Activated CD8-positive, alpha-beta memory T cell treated with anti-CD3 and anti-CD28 coated beads, Interleukin-2, amount 10 ng/mL, durations not matched to agents 7 days and 5 days (primary cell): ENCODE measurements at regions of chr9 and their contacts with region 1.

Region 1: GRCh38 chr9:116737152-116737546 is 50.0 kb downstream of the TRIM32 start:
- DNase-seq: peak; percentile 67
- ATAC-seq: no peak
- H3K4me3 Mint-ChIP-seq: no peak overlapping the region
- H3K27ac Mint-ChIP-seq: no peak overlapping the region
- H3K4me1 Mint-ChIP-seq: peaks cover 2% of the 10 kb centered on the region
- H3K27me3 Mint-ChIP-seq: peaks cover 5% of the 10 kb centered on the region

Region 2: DNA sequence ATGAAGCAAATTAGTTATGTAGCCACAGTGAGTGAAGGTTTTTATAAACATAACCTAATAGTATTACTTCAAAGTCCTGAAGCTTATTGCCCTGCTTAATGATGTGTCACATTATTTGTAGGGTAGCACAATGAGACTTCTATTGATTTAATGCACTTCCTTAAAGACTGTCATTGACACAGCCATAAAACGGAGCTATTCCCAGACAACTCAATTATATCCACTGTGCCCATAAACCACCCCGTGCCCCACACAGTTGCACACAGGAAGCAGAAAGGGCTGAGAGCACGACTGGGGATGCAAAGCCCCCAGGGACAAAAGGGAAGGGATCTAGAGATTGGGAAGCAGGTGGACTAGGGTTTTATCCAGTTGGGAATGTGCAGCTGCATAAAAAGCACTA is 13.0 kb before region 1 on chr9:
- CTCF ChIA-PET with region 1: interaction called, 15 read pairs
- DNase-seq: no peak
- ATAC-seq: no peak
- H3K4me3 Mint-ChIP-seq: no peak overlapping the region
- H3K27ac Mint-ChIP-seq: no peak overlapping the region
- H3K4me1 Mint-ChIP-seq: no peaks in the 10 kb centered on the region
- H3K27me3 Mint-ChIP-seq: peaks cover 2% of the 10 kb centered on the region

Region 3: DNA sequence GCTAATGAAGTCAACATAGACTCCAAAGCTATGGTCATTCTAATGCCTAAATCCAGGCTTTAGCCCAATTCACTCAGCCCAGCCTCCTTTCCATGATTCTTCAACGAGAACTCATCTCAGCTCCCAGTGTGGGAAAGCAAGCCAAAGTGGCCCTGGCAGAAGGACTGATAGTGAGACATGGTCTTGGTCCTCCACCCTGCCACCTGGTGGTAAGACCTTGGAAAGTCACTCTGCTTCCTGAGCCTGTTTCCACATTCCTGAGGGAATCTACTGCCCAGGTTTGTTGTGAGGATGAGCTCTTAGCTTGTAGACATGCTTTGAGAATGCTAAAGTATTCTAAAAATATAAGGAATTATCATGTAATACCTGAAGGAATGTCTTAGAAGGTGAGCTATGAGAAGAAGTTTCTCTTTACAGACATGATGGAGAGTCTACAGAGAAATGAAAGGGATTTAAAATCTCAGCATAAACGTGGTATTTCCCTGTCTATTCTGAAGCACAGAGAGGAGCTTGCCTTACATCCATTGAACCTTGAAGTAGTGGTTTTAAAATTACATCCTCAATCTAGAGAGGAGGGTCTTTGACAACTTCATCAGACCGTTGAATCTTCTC is 123.5 kb after region 1 on chr9:
- CTCF ChIA-PET with region 1: interaction called, 33 read pairs
- DNase-seq: no peak
- ATAC-seq: no peak
- H3K4me3 Mint-ChIP-seq: no peak overlapping the region
- H3K27ac Mint-ChIP-seq: no peak overlapping the region
- H3K4me1 Mint-ChIP-seq: no peaks in the 10 kb centered on the region
- H3K27me3 Mint-ChIP-seq: no peaks in the 10 kb centered on the region